Transverse colon (tissue), 4 donors: ENCODE measurements at regions of chr13 and their contacts with region 1.

Region 1: DNA sequence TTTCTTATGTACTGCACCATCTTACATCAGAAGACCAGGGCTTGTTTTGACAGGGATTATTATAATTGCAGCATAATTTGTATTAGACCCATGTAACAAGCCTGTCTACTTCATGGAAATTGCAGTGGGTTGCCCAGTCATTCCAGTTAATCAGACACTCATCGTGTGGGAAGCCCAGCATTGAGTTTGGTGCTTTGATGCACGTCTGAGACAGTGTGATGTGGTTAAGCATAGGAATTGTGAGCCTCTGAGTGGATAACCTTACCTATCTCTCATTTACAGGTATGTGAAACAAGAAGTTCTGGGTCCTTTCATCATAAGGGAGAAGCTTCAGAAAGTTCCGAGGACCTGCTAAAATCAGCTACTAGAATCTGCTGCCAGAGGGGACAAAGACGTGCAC is 12.8 kb downstream of the RGCC start:
- DNase-seq: no peak
- H3K4me3 ChIP-seq: no peak overlapping the region
- H3K27ac ChIP-seq: no peak overlapping the region
- H3K4me1 ChIP-seq: peaks cover 0 to 8% (median 0%) of the 10 kb centered on the region in 4 donors
- H3K27me3 ChIP-seq: no peaks in the 10 kb centered on the region
- CTCF ChIP-seq: no peak
- EP300 ChIP-seq: no peak
- POLR2A ChIP-seq: no peak

Region 2: DNA sequence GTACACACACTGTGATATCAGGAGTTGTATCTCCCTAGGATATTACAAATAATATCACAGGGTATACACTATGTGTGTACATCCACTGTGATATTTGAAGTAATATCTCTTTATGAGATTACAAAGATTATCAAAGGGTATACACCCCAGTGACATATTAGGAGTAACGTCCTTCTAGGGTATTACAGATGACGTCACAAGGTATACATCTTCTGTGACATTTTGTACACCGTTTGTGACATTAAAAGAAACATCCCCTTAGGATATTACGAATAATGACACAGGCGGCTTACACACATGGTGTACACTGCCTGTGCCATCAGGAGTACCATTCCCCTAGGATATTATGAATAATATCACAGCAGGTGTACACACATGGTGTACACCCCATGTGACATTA is 26.2 kb before region 1 on chr13:
- in situ Hi-C with region 1: no loop called
- intact Hi-C with region 1: loop called (anchors 2 kb)
- DNase-seq: no peak
- H3K4me3 ChIP-seq: no peak overlapping the region
- H3K27ac ChIP-seq: no peak overlapping the region
- H3K4me1 ChIP-seq: no peaks in the 10 kb centered on the region
- H3K27me3 ChIP-seq: no peaks in the 10 kb centered on the region
- CTCF ChIP-seq: no peak
- EP300 ChIP-seq: no peak
- POLR2A ChIP-seq: no peak